Activated CD8-positive, alpha-beta T cell treated with anti-CD3 and anti-CD28 coated beads for 36 hours (primary cell): ENCODE measurements at regions of chr6 and their contacts with region 1.

Region 1: DNA sequence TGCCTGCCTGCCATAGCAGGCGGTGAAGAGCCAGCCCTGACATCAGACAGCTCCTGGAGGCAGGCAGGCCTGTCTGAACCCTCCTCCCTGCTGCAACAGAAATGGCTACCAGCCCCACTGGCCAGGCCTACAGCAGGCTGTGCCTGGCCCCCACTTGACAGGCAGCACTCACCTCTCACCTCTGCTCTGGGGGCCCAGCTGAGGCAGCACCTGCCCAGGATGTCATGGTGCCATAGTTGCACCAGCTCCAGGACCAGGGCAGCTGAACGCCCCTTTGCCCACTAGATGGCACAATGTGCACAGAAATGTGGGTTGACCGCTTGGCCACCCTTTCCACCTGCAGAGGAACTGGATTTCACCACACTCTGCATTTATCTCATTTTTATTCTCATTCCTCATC is 30.6 kb downstream of the MRPL14 start:
- DNase-seq: peak; percentile 86
- ATAC-seq: peak; percentile 96
- H3K4me3 Mint-ChIP-seq: no peak overlapping the region
- H3K27ac Mint-ChIP-seq: no peak overlapping the region
- H3K4me1 Mint-ChIP-seq: no peaks in the 10 kb centered on the region
- H3K27me3 Mint-ChIP-seq: no peaks in the 10 kb centered on the region
- CTCF ChIP-seq: peak; percentile 71

Region 2: GRCh38 chr6:44133003-44133931 is 36.7 kb after region 1 on chr6:
- CTCF ChIA-PET with region 1: interaction called, 12 read pairs
- POLR2A ChIA-PET with region 1: interaction called, 3 read pairs
- intact Hi-C with region 1: no loop called
- DNase-seq: no peak
- ATAC-seq: no peak
- H3K4me3 Mint-ChIP-seq: no peak overlapping the region
- H3K27ac Mint-ChIP-seq: no peak overlapping the region
- H3K4me1 Mint-ChIP-seq: peaks cover 5% of the 10 kb centered on the region
- H3K27me3 Mint-ChIP-seq: no peaks in the 10 kb centered on the region
- CTCF ChIP-seq: no peak

Region 3: DNA sequence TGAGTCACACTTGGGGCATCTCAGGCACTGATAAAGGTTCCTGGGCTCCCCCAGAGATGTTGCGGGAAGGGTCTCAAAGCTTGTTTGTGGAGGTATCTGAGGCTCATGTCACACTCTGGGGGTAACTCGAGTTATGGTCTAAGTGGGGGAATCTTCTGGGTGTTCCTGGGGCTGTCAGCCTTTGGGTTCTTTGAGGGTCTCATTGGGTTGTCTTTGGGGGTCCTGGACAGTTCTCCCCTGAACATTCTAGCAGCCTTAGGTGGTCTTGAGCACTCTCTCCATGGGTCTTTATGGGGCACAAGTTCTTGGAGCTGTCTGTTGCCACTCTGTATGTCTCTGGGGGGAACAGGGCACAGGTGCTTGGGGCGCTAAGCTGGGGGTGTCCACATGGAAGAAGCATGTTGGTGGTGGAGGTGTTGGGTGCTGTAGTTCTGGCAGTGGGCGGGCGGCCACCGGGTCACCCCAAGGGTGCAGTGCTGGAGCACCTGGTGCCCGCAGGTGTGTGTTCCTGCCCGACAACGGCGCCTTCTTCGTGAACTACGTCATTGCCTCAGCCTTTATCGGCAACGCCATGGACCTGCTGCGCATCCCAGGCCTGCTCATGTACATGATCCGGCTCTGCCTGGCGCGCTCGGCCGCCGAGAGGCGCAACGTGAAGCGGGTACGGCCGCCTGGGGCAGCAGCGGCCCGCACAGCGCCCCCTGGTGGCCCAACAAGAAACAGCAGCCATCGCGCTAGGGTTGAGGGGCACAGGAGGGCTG is 54.9 kb after region 1 on chr6:
- CTCF ChIA-PET with region 1: interaction called, 60 read pairs
- POLR2A ChIA-PET with region 1: interaction called, 3 read pairs
- intact Hi-C with region 1: loop called (anchors 2 kb)
- DNase-seq: peak; percentile 86
- ATAC-seq: peak; percentile 96
- H3K4me3 Mint-ChIP-seq: no peak overlapping the region
- H3K27ac Mint-ChIP-seq: no peak overlapping the region
- H3K4me1 Mint-ChIP-seq: peaks cover 5% of the 10 kb centered on the region
- H3K27me3 Mint-ChIP-seq: no peaks in the 10 kb centered on the region
- CTCF ChIP-seq: peak; percentile 99

Region 4: DNA sequence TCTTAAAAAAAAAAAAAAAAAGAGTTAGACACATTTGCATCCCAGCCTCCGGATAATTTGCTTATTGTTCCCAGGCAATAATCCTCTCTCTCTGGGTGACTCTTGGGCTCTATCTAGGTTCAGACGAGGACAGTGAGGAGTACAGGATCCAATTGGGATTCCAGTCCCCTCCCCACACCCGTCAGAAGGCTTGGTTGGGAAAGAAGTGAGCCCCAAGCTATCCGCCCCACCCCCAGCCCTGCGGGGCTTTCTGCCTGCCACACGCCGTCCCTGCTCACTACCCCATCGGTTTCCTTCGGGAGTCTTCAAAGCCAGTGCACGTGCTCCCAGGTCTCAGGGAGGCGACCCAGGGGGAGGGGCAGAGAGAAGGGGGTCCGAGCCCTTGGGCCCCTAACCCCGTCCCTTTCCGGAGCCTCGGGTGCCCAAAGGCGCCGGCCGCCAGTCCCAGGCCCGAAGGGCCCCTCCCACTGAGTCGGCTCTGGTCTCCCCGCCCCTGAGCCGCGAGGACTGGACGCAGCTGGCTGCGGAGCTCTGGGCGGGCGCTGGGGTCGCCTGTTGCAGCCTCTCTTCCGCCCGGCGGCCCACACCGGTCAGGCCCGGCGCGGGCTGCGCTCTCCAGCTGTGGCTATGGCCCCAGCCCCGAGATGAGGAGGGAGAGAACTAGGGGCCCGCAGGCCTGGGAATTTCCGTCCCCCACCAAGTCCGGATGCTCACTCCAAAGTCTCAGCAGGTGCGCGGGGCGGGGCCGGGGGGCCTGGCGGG is 122.6 kb after region 1 on chr6:
- CTCF ChIA-PET with region 1: no interaction called
- POLR2A ChIA-PET with region 1: no interaction called
- intact Hi-C with region 1: no loop called
- DNase-seq: peak; percentile 42
- ATAC-seq: no peak
- H3K4me3 Mint-ChIP-seq: peak overlapping the region; percentile 54
- H3K27ac Mint-ChIP-seq: no peak overlapping the region
- H3K4me1 Mint-ChIP-seq: peaks cover 35% of the 10 kb centered on the region
- H3K27me3 Mint-ChIP-seq: peaks cover 6% of the 10 kb centered on the region
- CTCF ChIP-seq: no peak

Region 5: DNA sequence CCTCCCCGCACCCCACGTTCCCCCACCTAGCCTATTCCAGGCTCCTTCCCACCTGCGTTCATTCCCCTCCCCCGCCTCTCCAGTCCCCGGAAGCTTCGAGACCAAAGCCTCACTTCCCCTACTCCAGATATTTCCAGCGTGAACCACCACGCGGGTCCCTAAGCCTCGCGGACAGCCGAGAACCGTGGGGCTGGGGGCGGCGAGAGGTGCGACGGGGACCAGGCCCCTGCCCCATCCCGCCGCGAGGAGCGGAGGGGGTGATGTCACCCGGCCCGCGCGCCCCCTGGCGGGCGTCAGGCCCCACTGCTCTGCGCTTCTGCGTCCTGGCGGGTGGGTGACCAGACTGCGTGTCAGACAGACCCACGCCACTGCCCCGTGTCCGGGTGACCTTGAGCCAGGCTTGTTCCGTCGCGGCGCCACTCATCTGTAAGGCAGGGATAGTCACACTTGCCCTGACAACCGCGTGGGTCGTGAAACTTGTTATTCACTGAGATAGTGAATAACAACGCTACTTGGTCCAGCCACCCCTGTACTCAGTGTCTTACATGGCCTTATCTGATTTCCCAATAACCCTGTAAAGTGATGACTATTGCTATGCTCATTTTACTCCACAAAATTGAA is 141.3 kb after region 1 on chr6:
- CTCF ChIA-PET with region 1: interaction called, 10 read pairs
- POLR2A ChIA-PET with region 1: no interaction called
- intact Hi-C with region 1: loop called (anchors 10 kb)
- DNase-seq: peak; percentile 80
- ATAC-seq: peak; percentile 88
- H3K4me3 Mint-ChIP-seq: peak overlapping the region; percentile 76
- H3K27ac Mint-ChIP-seq: peak overlapping the region; percentile 93
- H3K4me1 Mint-ChIP-seq: peaks cover 21% of the 10 kb centered on the region
- H3K27me3 Mint-ChIP-seq: no peaks in the 10 kb centered on the region
- CTCF ChIP-seq: peak; percentile 96